AG04450 (cell line): ENCODE measurements at regions of chr3 and their contacts with region 1.

Region 1: DNA sequence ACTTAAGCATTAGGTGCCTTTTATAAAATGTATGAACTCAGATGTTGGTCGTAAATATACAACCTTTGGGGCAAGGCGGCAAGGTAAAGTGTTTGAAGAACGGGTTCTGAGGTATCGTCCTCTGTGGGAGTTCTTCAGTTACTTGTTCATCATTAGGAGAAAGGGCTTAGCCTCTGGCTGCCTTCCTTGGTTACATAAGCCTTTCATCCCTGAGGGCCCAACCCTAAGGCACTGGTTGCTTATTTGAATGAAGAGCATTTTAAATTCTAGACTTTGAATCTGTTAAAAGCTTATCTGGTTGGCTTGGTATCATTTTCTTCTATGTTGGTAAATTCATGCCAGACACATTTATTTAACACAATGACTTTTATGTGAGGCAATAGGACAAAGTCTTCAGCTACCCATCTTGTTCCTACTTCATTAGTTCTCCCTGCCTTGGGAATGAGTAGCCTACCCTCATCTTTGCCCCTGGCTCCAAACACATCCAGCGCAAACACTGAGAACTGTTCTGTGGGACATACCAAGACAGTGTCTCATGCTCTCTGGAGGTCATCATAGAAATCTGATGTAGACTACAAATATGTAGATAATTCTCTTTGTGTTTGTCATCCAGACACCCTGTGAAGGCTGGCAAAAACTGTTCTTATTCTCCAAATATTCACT is 12.4 kb upstream of the CCDC80 start:
- DNase-seq: peak; percentile 92
- H3K4me3 ChIP-seq: no peak overlapping the region
- H3K27ac ChIP-seq: peak overlapping the region; percentile 99
- H3K27me3 ChIP-seq: no peaks in the 10 kb centered on the region
- CTCF ChIP-seq: no peak

Region 2: DNA sequence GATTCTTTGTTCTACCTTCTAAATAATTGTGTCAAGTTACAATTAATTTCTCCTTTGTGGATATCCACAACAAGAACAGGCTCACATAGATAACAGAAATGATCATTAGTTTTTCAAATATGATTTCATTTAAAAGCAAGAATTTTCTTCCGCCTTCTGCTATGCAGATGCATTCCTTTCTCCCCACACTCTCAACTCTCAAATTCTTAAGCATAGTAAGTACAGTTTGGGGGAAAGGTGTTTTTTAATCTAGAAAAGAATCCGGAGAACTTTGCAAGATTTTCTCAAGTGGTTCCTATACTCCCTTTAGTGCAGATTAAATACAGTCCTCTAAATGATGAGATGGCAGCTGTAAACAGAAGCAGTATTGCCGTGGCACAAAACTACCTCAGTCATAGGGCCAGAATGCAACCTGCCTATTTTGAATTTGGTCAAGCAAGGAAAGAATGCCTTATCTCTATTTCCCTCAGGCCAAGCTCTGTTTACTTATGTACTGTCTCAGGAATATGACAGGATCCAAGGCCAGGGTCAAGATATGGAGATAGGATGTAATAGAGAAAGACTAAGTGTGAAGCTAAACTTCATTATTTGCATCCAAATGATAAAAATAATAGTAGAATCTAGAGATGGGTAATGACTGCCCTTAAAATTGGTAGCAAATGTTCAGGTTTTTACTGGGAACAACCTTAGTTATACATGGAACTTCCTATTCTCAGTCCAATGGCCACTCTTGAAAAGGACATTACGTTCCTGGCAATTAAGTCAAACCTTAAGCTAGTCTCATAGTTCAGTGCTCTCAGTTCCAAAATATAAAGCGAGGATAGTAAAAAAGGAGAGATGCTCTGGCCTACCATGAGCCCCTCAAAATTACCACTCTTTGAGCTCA is 871.5 kb before region 1 on chr3:
- CTCF ChIA-PET with region 1: no interaction called
- POLR2A ChIA-PET with region 1: no interaction called
- DNase-seq: no peak
- H3K4me3 ChIP-seq: no peak overlapping the region
- H3K27ac ChIP-seq: no peak overlapping the region
- H3K27me3 ChIP-seq: no peaks in the 10 kb centered on the region
- CTCF ChIP-seq: no peak

Region 3: DNA sequence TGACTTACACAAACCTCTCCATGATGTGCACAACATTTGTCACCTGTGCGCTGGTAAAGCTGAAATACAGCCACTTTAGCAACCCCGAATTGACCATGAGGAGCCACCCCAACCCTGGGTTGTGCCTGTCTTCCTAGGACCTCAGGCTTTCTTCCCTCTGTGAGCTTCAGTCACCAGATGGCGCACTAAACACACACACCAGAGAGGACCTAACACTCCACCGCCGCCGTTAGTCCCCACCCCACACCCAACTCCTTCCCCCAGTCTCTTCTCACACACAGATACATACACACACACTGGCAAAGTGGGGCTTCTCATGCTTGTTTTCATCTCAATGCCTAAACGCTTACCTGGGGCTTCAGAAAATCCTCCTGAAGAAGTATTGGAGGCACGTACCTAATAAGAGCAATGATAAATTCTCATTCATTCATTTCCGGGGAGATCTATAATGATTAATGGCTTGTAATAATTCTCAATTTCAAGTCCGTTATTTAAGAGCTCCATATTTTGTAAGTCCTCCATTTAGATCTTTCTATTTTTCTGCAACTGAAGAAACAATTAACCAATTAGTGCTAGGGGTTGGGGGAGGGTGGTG is 10.3 kb before region 1 on chr3:
- CTCF ChIA-PET with region 1: interaction called, 40 read pairs
- POLR2A ChIA-PET with region 1: interaction called, 24 read pairs
- DNase-seq: peak; percentile 86
- H3K4me3 ChIP-seq: peak overlapping the region; percentile 28
- H3K27ac ChIP-seq: no peak overlapping the region
- H3K27me3 ChIP-seq: no peaks in the 10 kb centered on the region
- CTCF ChIP-seq: peak; percentile 96

Region 4: DNA sequence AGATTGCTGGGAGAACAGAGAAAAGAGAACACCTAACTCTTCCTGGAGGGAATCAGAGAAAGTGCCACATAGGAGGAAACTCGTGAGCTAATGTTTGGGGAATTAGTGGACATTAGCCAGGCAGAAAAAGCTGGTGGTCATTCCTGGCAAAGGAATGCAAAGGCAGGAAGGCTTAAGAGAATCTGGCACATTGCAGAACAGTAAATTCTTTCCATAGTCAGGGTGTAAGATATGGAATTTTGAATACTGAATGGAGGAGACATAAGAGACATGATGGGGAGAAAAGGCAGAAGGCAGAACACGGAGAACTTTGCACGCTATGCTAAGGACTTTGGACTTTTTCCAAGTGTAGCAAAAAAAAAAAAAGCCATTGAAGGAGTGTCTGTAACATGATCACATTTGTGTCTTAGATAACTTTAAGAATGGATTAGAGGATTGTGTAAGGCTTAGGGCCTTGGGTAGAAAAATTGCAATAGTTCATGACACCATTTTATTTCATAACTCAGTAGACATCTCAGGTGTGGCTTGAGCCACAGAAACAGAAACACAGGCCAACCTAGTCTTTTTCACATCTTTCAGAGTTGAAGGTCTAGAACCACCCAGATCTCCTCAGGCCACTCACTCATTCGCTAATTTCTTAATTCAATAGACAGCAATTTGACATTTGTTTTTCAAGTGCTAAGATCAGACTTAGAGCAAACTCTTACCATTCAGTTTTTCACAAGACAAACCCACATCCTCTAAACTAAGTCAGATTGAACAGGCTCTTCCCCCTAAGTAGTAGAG is 18.8 kb after region 1 on chr3:
- CTCF ChIA-PET with region 1: interaction called, 4 read pairs
- POLR2A ChIA-PET with region 1: interaction called, 14 read pairs
- DNase-seq: peak; percentile 77
- H3K4me3 ChIP-seq: no peak overlapping the region
- H3K27ac ChIP-seq: peak overlapping the region; percentile 65
- H3K27me3 ChIP-seq: no peaks in the 10 kb centered on the region
- CTCF ChIP-seq: no peak

Region 5: GRCh38 chr3:112822069-112823055 is 169.0 kb after region 1 on chr3:
- CTCF ChIA-PET with region 1: no interaction called
- POLR2A ChIA-PET with region 1: interaction called, 12 read pairs
- DNase-seq: no peak
- H3K4me3 ChIP-seq: no peak overlapping the region
- H3K27ac ChIP-seq: no peak overlapping the region
- H3K27me3 ChIP-seq: no peaks in the 10 kb centered on the region
- CTCF ChIP-seq: no peak

Region 6: DNA sequence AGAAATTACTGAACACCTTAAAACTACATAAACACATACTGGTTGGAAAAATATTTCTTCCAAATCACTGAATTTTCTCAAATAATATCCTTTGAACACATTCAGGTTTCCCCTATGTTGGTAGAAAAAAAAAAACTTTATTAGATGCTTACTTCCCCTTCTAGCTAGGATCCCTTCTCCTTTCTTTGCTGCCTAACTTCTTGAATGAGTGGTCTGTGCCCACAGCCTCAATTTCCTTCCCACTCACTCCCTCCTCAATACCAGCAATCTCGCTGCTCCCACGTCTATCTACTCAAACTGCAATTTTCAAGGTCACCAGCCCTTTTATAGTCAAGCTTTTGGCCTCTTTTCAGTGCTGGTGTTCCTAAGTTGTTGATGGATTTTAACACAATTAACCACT is 313.3 kb after region 1 on chr3:
- CTCF ChIA-PET with region 1: no interaction called
- POLR2A ChIA-PET with region 1: no interaction called
- DNase-seq: no peak
- H3K4me3 ChIP-seq: no peak overlapping the region
- H3K27ac ChIP-seq: no peak overlapping the region
- H3K27me3 ChIP-seq: peaks cover 23% of the 10 kb centered on the region
- CTCF ChIP-seq: no peak